Activated CD4-positive, alpha-beta memory T cell treated with anti-CD3 and anti-CD28 coated beads, Interleukin-2, amount 10 ng/mL, durations not matched to agents 7 days and 5 days (primary cell): ENCODE measurements at regions of chr4 and their contacts with region 1.

Region 1: GRCh38 chr4:166091912-166092510 is 219.0 kb downstream of the TLL1 start:
- DNase-seq: no peak
- H3K4me3 Mint-ChIP-seq: no peak overlapping the region
- H3K27ac Mint-ChIP-seq: no peak overlapping the region
- H3K4me1 Mint-ChIP-seq: no peaks in the 10 kb centered on the region
- H3K27me3 Mint-ChIP-seq: no peaks in the 10 kb centered on the region

Region 2: GRCh38 chr4:165493359-165493758 is 598.7 kb before region 1 on chr4:
- CTCF ChIA-PET with region 1: interaction called, 18 read pairs
- POLR2A ChIA-PET with region 1: no interaction called
- DNase-seq: peak; percentile 68
- H3K4me3 Mint-ChIP-seq: no peak overlapping the region
- H3K27ac Mint-ChIP-seq: no peak overlapping the region
- H3K4me1 Mint-ChIP-seq: peaks cover 2% of the 10 kb centered on the region
- H3K27me3 Mint-ChIP-seq: peaks cover 24% of the 10 kb centered on the region

Region 3: DNA sequence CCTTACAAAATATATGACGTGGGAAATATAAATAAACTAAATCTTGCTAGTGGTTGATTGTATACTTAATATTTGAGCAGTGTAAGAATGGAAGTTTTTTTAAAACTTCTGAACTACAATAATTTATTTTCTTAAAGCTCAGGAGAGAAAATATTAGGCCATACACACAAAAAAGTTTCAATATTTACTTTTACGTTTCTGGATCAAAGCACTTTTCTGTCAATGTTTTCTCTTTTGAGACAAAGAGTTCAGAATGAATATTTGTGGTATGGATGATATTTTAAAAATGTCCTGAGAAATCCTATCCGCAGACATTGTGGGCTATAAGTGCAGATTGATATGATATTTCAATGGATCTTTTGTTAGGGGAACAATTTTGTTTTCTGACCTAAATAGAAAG is 109.1 kb before region 1 on chr4:
- CTCF ChIA-PET with region 1: no interaction called
- POLR2A ChIA-PET with region 1: no interaction called
- DNase-seq: no peak
- H3K4me3 Mint-ChIP-seq: no peak overlapping the region
- H3K27ac Mint-ChIP-seq: no peak overlapping the region
- H3K4me1 Mint-ChIP-seq: no peaks in the 10 kb centered on the region
- H3K27me3 Mint-ChIP-seq: no peaks in the 10 kb centered on the region